Calu3 (cell line): ENCODE measurements at regions of chr6 and their contacts with region 1.

Region 1: DNA sequence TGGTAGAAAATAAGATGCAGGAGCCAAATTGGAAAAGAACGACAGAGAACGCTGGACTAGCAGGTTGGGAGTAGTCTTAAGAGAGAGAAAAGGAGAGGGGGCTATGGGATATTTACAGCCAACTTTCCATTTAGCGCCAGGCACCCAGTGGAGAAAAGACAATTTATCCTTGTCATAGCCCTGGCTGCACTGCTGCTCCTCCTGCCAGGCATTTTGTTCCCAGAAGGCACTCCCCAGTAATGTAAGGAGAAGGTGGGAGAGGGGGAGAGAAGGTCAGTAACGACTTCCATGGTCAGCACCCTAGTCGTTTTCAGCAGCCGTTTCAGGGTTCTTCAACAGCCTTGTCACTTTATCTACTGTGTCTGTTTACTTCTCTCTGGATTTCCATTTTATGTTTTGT is 159.0 kb downstream of the TRMT11 start:
- DNase-seq: no peak
- H3K4me3 Mint-ChIP-seq: no peak overlapping the region
- H3K27ac Mint-ChIP-seq: no peak overlapping the region
- H3K4me1 Mint-ChIP-seq: no peaks in the 10 kb centered on the region
- H3K27me3 Mint-ChIP-seq: no peaks in the 10 kb centered on the region
- CTCF ChIP-seq: no peak

Region 2: DNA sequence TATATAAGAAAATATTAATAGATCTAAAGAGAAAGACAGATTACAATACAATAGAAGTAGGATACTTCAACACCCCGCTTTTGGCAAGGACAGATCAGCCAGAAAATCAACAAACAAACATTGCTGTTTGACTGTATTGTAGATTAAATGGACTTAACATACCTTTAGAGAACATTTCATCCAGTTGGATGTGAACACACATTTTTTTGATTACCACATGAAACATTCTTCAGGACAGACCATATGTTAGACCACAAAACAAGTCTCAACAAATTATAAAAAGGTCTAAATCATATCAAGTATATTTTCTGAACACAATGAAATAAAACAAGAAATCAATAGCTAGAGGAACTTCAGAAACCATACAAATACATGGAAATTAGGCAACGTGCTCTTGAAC is 10.9 kb before region 1 on chr6:
- CTCF ChIA-PET with region 1: no interaction called
- intact Hi-C with region 1: loop called (anchors 1 kb)
- DNase-seq: no peak
- H3K4me3 Mint-ChIP-seq: no peak overlapping the region
- H3K27ac Mint-ChIP-seq: no peak overlapping the region
- H3K4me1 Mint-ChIP-seq: no peaks in the 10 kb centered on the region
- H3K27me3 Mint-ChIP-seq: no peaks in the 10 kb centered on the region
- CTCF ChIP-seq: no peak